Astrocyte of the cerebellum (primary cell): ENCODE measurements at regions of chr9 and their contacts with region 1.

Region 1: GRCh38 chr9:116959809-116960208 is 272.7 kb downstream of the TRIM32 start:
- DNase-seq: no peak
- H3K4me3 ChIP-seq: no peak overlapping the region
- CTCF ChIP-seq: no peak

Region 2: DNA sequence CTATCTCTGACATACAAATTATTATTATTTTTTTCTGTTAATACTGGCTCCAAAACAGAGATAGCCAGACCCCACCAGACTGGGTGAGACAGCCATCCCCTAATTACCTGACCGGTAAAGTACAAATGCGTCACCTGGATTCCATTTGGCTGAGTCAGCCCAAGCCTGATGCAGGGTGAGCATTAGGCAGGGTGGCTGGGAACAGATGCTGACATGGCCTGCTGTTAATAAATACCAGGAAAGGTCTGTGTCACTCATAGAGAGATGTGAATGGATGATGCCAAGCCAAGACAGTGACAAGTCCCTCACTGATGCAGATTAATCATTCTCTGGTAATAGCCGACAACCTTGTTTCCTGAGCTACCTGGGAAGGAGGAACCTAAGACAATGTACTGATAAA is 89.2 kb before region 1 on chr9:
- in situ Hi-C with region 1: no loop called
- DNase-seq: no peak
- H3K4me3 ChIP-seq: no peak overlapping the region
- CTCF ChIP-seq: no peak

Region 3: DNA sequence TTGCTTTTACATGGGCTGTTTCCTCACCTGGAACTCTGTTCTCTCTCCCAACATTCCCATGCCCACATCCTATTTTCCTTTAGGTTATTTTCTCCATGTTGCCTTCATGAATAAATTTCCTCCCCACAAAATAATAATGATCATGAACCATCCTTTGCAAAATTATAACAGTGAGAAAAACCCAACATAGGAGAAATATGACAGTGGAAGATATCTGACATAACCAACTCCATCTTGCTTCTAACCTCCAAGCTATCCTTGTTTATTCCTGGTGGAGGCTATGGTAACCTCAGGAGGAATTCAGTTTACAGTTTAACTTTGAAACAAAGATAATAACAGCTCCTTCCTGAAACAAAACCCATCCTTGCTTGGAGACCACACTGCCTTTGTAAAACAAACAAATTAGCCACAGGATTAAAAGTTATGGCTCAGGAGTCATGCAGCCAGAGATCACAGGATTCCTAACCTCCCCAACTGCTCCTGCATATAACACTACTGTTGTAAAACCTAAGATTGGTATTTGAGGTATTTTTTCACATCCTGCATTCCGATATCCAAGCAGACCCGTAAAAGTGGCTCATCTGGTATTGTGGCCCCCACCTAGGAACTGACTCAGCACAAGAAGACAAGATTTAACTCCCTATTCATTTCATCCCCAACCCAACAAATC is 60.3 kb before region 1 on chr9:
- in situ Hi-C with region 1: loop called (anchors 10 kb)
- DNase-seq: no peak
- H3K4me3 ChIP-seq: no peak overlapping the region
- CTCF ChIP-seq: no peak

Region 4: DNA sequence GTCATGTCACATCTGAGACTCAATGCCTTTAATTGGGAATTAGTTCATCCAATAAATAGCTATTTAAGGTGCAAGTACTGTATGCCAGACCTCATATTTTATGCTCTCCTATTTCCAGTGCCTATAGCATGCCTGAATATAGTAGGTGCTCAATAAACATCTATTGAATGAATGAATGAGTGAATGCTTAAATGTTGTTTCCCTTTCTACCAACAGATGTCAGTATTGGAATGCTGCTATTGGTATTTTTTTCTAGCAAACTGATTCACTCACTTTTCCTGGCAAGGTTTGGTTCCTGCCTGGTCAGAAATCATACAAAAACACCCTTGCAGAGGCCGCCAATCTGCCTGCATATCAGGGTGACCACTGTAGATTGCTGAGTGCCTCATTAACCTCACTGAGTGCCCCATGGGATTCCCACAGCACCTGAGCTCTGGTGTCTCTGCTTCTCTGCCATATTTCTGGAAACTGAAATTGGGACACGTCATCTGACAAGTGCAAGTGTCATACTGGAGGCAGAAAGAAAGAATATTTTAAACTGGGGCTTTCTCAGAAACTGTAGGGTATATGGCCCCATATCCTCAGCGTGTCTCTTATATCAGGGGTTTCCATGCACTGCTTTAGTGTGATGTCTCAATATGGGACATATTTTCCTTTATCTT is 87.0 kb after region 1 on chr9:
- in situ Hi-C with region 1: no loop called
- DNase-seq: no peak
- H3K4me3 ChIP-seq: no peak overlapping the region
- CTCF ChIP-seq: no peak